Heart right ventricle (tissue), 16 donors: ENCODE measurements at regions of chr9 and their contacts with region 1.

Region 1: GRCh38 chr9:1994180-1994579 is 21.0 kb upstream of the SMARCA2 start:
- DNase-seq: no peak
- ATAC-seq: no peak
- H3K4me3 ChIP-seq: no peak overlapping the region
- H3K27ac ChIP-seq: no peak overlapping the region
- H3K4me1 ChIP-seq: no peaks in the 10 kb centered on the region
- H3K27me3 ChIP-seq: peaks cover 0 to 4% (median 0%) of the 10 kb centered on the region in 7 donors
- CTCF ChIP-seq: no peak

Region 2: DNA sequence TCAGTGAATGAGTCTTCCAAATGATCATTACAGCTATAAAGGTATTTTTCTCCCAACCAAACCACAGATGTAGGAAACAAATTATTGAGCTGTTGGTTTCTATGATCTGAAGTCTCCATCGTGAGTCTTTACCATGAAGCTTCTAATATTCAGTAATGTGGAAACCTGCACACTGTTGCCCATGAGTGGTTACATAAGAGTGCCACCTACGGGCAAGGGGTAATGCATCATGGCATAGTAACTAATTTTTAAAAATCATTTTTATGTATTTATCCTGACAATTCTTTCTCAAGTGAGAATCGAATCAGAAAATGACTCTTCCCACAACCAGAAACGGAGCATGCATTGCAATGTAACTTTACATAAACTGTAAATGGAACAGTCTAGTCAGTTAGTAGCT is 261.5 kb before region 1 on chr9:
- intact Hi-C with region 1: loop called in 1 of 10 experiments (anchors 5 kb)
- DNase-seq: no peak
- ATAC-seq: no peak
- H3K4me3 ChIP-seq: no peak overlapping the region
- H3K27ac ChIP-seq: no peak overlapping the region
- H3K4me1 ChIP-seq: no peaks in the 10 kb centered on the region
- H3K27me3 ChIP-seq: peaks cover 0 to 6% (median 0%) of the 10 kb centered on the region in 7 donors
- CTCF ChIP-seq: no peak

Region 3: DNA sequence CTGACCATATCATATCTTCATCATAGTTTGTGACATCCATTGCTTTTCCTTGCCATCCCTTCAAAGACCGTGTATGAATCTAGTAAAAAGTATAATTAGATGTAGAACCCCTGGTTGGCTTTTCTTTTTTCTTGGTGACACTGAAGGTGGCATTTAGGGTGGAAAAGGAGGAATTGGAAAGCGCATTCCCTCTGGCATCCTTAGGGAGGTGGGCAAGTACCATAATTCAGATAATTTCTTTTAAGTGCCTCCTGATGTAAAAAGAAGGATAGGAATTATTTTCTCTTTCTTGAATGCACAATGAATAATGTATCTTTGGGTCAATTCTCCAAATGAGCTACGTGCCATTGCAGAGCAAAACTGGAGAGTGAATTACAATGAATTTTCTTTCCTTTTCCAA is 52.2 kb before region 1 on chr9:
- intact Hi-C with region 1: no loop called
- DNase-seq: no peak
- ATAC-seq: no peak
- H3K4me3 ChIP-seq: no peak overlapping the region
- H3K27ac ChIP-seq: no peak overlapping the region
- H3K4me1 ChIP-seq: no peaks in the 10 kb centered on the region
- H3K27me3 ChIP-seq: peaks cover 0 to 7% (median 0%) of the 10 kb centered on the region in 7 donors
- CTCF ChIP-seq: peak in 5 of 9 donors; percentile 13 to 38 (median 27)

Region 4: DNA sequence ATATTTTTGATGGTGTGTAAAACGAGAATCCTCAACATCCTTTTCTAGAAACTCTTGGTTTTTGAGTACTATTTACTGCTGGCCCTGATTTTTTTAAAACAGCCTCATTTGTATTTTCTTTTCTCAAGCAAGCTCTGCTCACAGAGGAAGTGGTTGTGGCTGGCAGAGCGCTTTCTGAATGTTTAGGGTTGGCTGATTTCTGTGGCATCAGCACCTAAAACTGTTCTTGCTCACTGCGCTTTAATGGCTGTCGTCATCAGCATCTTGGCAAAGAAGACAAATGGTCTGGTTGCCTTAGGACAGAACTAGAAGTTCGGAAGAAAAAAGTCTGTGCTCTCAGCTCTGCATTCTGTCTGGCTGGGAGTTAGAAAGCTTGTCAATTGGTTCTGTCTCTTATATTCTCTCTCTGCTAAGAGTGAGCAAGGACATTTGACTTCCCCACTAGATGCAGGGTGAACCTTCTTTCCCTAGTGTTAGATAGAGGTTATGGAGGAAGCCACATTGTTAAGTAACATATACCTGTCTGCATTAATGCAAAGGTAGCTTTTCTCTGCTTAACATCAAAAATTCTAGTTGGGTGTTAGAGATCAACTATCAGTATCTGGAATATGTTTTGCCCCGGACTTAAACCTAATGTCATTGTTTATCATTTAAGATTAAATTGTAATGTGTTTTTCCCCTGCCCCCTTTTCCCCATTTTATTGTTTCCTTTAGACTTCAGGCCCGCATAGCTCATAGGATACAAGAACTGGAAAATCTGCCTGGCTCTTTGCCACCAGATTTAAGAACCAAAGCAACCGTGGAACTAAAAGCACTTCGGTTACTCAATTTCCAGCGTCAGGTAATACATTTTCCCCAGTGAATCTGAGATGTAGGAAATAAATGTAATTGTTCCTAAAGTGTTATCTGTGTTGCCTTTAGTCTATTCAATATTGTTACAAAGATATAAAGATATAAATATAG is 60.0 kb after region 1 on chr9:
- intact Hi-C with region 1: loop called in 1 of 10 experiments (anchors 10 kb)
- DNase-seq: no peak
- ATAC-seq: peak in 3 of 8 donors; percentile 35 to 71 (median 52)
- H3K4me3 ChIP-seq: no peak overlapping the region
- H3K27ac ChIP-seq: peak overlapping the region in 1 of 10 donors; percentile 57
- H3K4me1 ChIP-seq: peaks cover 0 to 31% (median 10%) of the 10 kb centered on the region in 9 donors
- H3K27me3 ChIP-seq: no peaks in the 10 kb centered on the region
- CTCF ChIP-seq: no peak